Activated B cell treated with CpG ODN at 0.5 μM for 24 hours (primary cell): ENCODE measurements at regions of chr22 and their contacts with region 1.

Region 1: GRCh38 chr22:17171313-17172171 is 12.5 kb upstream of the HDHD5 start:
- DNase-seq: peak; percentile 86
- ATAC-seq: peak; percentile 91
- H3K4me3 Mint-ChIP-seq: peak overlapping the region; percentile 77
- H3K27ac Mint-ChIP-seq: no peak overlapping the region
- H3K4me1 Mint-ChIP-seq: peaks cover 8% of the 10 kb centered on the region
- H3K27me3 Mint-ChIP-seq: peaks cover 2% of the 10 kb centered on the region
- CTCF ChIP-seq: peak; percentile 64

Region 2: GRCh38 chr22:17077255-17077654 is 94.3 kb before region 1 on chr22:
- CTCF ChIA-PET with region 1: interaction called, 28 read pairs
- POLR2A ChIA-PET with region 1: no interaction called
- intact Hi-C with region 1: loop called (anchors 1 kb)
- DNase-seq: no peak
- ATAC-seq: no peak
- H3K4me3 Mint-ChIP-seq: no peak overlapping the region
- H3K27ac Mint-ChIP-seq: no peak overlapping the region
- H3K4me1 Mint-ChIP-seq: peaks cover 3% of the 10 kb centered on the region
- H3K27me3 Mint-ChIP-seq: no peaks in the 10 kb centered on the region
- CTCF ChIP-seq: no peak

Region 3: GRCh38 chr22:17205432-17205831 is 33.9 kb after region 1 on chr22:
- CTCF ChIA-PET with region 1: interaction called, 20 read pairs
- POLR2A ChIA-PET with region 1: interaction called, 4 read pairs
- intact Hi-C with region 1: no loop called
- DNase-seq: no peak
- ATAC-seq: peak; percentile 66
- H3K4me3 Mint-ChIP-seq: no peak overlapping the region
- H3K27ac Mint-ChIP-seq: peak overlapping the region; percentile 56
- H3K4me1 Mint-ChIP-seq: no peaks in the 10 kb centered on the region
- H3K27me3 Mint-ChIP-seq: no peaks in the 10 kb centered on the region
- CTCF ChIP-seq: no peak

Region 4: DNA sequence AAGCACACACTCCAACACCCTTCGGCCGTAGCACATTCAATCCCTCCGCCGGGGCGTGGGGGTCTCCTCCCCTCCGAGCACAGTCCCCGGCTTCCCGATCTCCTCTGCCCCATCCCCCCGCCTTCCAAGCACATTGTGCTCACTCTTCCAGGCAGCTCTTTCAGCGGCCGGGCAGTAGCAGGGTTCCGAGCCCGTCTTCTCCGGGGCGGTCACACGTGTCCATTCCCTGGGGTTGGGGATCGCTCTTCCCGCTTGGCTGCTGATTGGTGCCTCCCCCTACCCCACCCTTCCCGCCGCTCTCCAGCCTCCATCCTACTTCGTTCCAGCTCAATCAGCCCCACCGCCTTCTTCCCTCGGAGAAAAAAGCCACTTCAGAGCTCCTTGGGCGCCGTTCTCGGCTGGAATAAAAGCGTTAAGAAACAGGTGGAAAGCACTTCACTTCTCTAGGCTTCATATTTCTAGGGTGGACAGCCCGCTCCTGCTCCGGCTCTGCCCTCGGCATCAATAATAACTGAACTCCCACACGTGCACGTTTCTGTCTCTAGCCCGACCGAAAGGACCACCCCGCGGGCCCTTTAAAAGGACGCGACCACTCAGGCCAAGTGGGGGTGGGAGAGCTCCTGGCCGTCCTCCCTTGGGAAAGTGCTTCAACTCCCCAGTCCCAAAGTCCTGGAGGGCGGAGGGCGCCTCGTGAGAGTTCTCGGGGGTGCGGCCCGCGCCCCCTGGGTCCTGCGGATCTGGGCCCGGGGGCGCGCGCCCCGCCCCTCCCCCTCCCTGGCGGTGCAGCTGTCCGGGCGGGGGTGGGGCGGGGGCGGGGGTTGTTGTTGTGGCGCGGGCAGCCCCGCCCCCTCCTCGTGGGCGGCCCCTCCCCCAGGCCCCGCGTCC is 197.3 kb after region 1 on chr22:
- CTCF ChIA-PET with region 1: interaction called, 15 read pairs
- POLR2A ChIA-PET with region 1: no interaction called
- intact Hi-C with region 1: no loop called
- DNase-seq: peak; percentile 44
- ATAC-seq: peak; percentile 56
- H3K4me3 Mint-ChIP-seq: peak overlapping the region; percentile 80
- H3K27ac Mint-ChIP-seq: peak overlapping the region; percentile 10
- H3K4me1 Mint-ChIP-seq: peaks cover 27% of the 10 kb centered on the region
- H3K27me3 Mint-ChIP-seq: peaks cover 39% of the 10 kb centered on the region
- CTCF ChIP-seq: no peak

Region 5: GRCh38 chr22:17597217-17597616 is 425.7 kb after region 1 on chr22:
- CTCF ChIA-PET with region 1: interaction called, 3 read pairs
- POLR2A ChIA-PET with region 1: no interaction called
- intact Hi-C with region 1: loop called (anchors 2 kb)
- DNase-seq: no peak
- ATAC-seq: no peak
- H3K4me3 Mint-ChIP-seq: no peak overlapping the region
- H3K27ac Mint-ChIP-seq: no peak overlapping the region
- H3K4me1 Mint-ChIP-seq: peaks cover 33% of the 10 kb centered on the region
- H3K27me3 Mint-ChIP-seq: no peaks in the 10 kb centered on the region
- CTCF ChIP-seq: no peak